ENCODE measurements at regions of chr2 and their contacts with region 1.

Region 1: GRCh38 chr2:177164584-177165052 is 48.0 kb upstream of the HNRNPA3 start:
- DNase-seq: peak; percentile 49 to 82
- ATAC-seq: peak; percentile 45 to 70; a peak in 4 of 6 replicates
- H3K4me3 ChIP-seq: peak overlapping the region; percentile 34
- H3K27ac ChIP-seq: peak overlapping the region; percentile 95 to 98
- H3K4me1 ChIP-seq: peaks cover 45% of the 10 kb centered on the region
- CTCF ChIP-seq: peak; percentile 99
- EP300 ChIP-seq: no peak
- POLR2A ChIP-seq: no peak
- RAD21 ChIP-seq: peak; percentile 99 to 100

Region 2: DNA sequence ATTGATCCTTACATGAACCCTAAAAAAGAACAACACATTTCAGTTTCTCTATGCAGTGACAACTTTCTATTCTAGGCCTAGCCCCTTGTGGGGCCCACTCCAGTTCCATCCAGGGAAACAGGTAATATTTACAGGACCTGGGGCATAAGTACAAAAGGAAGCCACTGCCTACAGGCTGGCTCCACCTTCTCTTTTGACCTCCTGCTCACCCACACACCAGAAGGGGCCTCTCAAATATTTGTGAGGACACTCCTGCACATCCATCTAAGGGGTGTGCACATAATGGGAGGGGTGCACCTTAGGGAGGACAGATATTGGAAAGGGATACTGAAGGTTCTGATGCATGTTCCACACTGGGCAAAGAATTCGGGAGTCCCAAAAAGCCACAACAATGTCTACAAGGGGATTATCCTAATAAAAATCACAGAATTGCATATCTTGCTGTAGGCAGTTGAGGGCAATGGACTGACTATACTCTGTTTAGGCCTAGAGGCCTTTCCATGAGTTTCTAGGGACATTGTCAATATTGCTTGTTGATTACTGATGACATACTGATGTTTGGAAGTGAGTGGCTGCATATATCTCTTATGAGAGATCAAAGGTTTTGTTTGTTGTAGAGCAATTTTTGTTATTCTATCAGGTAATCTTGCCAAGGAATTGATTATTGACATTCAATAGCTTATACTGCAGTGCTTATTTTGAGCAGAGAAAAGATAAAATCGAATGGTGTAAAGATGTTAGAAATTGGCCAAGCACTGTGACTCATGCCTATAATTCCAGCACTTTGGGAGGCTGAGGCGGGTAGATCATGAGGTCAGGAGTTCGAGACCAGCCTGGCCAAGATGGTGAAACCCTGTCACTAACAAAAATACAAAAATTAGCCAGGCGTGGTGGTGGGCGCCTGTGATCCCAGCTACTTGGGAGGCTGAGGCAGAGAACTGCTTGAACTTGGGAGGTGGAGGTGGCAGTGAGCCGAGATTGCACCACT is 24.2 kb after region 1 on chr2:
- CTCF ChIA-PET with region 1: interaction called, 15 read pairs
- POLR2A ChIA-PET with region 1: no interaction called
- DNase-seq: no peak
- ATAC-seq: peak in 1 of 2 experiments; percentile 34; a peak in 1 of 6 replicates
- H3K4me3 ChIP-seq: no peak overlapping the region
- H3K27ac ChIP-seq: peak overlapping the region in 1 of 2 experiments; percentile 3; a peak in 1 of 6 replicates
- H3K4me1 ChIP-seq: peaks cover 12% of the 10 kb centered on the region
- CTCF ChIP-seq: no peak
- EP300 ChIP-seq: no peak
- POLR2A ChIP-seq: no peak
- RAD21 ChIP-seq: no peak

Region 3: GRCh38 chr2:177212106-177212890 is 47.7 kb after region 1 on chr2 and contains the start of gene HNRNPA3:
- CTCF ChIA-PET with region 1: interaction called, 8 read pairs
- POLR2A ChIA-PET with region 1: interaction called, 17 read pairs
- DNase-seq: peak; percentile 94 to 99
- ATAC-seq: peak; percentile 94 to 97
- H3K4me3 ChIP-seq: peak within 1 kb of the TSS; percentile 91
- H3K27ac ChIP-seq: peak within 1 kb of the TSS; percentile 99 to 100
- H3K4me1 ChIP-seq: peaks cover 35% of the 10 kb centered on the region
- CTCF ChIP-seq: peak; percentile 19; the same call in 1 of the 3 replicates
- EP300 ChIP-seq: no peak
- POLR2A ChIP-seq: peak; percentile 60
- RAD21 ChIP-seq: no peak; a peak in 1 of 5 replicates
- polyA plus RNA-seq, gene HNRNPA3: 250 and 357 TPM in 2 replicates

Region 4: GRCh38 chr2:177254433-177255226 is 90.0 kb after region 1 on chr2:
- CTCF ChIA-PET with region 1: interaction called, 123 read pairs
- POLR2A ChIA-PET with region 1: interaction called, 3 read pairs
- DNase-seq: peak in 1 of 2 experiments; percentile 86
- ATAC-seq: peak; percentile 66 to 80
- H3K4me3 ChIP-seq: no peak overlapping the region
- H3K27ac ChIP-seq: peak overlapping the region; percentile 75 to 81; a peak in 5 of 6 replicates
- H3K4me1 ChIP-seq: peaks cover 78% of the 10 kb centered on the region
- CTCF ChIP-seq: peak; percentile 72
- EP300 ChIP-seq: no peak
- POLR2A ChIP-seq: no peak
- RAD21 ChIP-seq: peak; percentile 49 to 66; a peak in 4 of 5 replicates

Region 5: DNA sequence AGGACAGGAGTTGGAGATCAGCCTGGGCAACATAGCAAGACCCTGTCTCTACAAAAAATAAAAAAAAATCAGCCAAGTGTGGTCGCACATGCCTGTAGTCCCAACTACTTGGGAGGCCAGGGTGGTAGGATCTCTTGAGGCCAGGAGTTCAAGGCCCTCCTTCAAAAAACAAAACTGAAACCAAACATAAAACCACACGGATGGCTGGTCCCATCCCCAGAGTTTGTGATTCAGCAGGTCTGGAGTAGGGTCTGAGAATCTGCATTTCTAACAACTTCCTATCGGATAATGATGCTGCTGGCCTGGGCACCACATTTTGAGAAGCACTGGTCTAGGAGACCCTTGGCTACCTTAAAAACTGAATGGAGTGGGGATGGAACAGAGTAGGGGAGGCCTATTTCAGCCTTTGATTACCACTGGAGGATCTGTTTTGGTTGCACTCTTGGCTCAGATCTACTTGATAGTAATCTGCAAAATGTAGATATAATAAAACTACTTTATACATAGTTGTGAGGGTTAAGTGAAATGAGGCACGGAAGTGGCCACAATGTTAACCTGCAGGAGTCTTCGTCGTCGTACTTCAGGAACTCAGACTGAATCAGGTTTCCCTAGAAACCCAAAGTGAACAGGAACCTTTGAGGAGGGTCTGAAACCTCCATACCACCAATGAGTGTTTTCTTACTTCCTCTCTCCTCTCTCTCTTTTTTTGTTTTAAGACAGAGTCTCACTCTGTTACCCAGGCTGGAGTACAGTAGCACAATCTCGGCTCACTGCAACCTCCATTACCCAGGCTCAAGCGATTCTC is 125.4 kb after region 1 on chr2:
- CTCF ChIA-PET with region 1: interaction called, 29 read pairs
- POLR2A ChIA-PET with region 1: no interaction called
- DNase-seq: no peak
- ATAC-seq: no peak
- H3K4me3 ChIP-seq: no peak overlapping the region
- H3K27ac ChIP-seq: no peak overlapping the region
- H3K4me1 ChIP-seq: no peaks in the 10 kb centered on the region
- CTCF ChIP-seq: no peak
- EP300 ChIP-seq: no peak
- POLR2A ChIP-seq: no peak
- RAD21 ChIP-seq: no peak

Region 6: GRCh38 chr2:177332041-177332991 is 167.7 kb after region 1 on chr2:
- CTCF ChIA-PET with region 1: interaction called, 78 read pairs
- POLR2A ChIA-PET with region 1: interaction called, 3 read pairs
- DNase-seq: peak; percentile 32 to 69
- ATAC-seq: peak; percentile 86 to 91
- H3K4me3 ChIP-seq: no peak overlapping the region
- H3K27ac ChIP-seq: peak overlapping the region; percentile 10 to 69; a peak in 3 of 6 replicates
- H3K4me1 ChIP-seq: peaks cover 12% of the 10 kb centered on the region; the same call in 2 of the 3 replicates
- CTCF ChIP-seq: peak; percentile 83
- EP300 ChIP-seq: no peak
- POLR2A ChIP-seq: no peak
- RAD21 ChIP-seq: peak; percentile 86 to 90

Region 7: GRCh38 chr2:177530561-177530960 is 365.9 kb after region 1 on chr2:
- CTCF ChIA-PET with region 1: no interaction called
- POLR2A ChIA-PET with region 1: no interaction called
- DNase-seq: no peak
- ATAC-seq: no peak
- H3K4me3 ChIP-seq: no peak overlapping the region
- H3K27ac ChIP-seq: no peak overlapping the region
- H3K4me1 ChIP-seq: no peaks in the 10 kb centered on the region
- CTCF ChIP-seq: no peak
- EP300 ChIP-seq: no peak
- POLR2A ChIP-seq: no peak
- RAD21 ChIP-seq: no peak